ENCODE measurements at regions of chr16 and their contacts with region 1.

Region 1: DNA sequence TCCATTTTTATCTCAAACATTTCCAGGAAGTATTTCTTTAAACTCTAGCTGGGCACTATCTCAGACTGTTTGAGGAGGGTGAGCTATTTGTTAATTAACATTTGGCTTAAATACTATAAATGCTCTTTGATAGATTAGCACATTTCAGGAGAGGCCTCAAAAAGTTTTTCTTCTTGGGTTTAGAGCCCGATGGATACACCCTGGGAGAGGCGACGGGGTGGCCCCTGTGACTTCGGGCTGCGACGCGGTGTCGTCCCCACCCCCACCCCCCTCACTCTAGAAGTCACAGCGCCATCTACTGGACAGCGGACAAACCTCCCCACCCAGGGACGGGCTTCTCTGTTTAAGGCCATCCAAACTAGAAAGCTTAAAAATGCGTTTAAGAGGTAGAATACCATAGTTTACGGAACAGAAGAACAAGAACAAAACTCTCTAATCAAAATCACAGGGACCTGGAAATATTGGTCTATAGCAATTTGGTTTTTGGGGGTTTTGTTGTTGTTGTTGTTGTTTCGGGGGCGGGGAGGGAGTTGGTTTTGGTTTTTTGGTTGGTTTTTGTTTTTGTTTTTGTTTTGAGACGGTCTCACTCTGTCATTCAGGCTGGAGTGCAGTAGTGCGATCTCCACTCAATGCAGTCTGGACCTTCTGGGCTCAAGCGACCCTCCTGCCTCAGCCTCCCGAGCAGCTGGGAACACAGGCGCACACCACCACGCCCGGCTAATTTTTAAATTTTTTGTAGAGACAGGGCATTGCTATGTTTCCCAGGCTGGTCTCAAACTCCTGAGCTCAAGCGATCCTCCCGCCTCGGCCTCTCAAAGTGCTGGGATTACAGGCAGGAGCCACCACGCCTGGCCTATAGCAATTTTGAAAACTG is 254.4 kb downstream of the C16orf95 start:
- DNase-seq: peak; percentile 87

Region 2: DNA sequence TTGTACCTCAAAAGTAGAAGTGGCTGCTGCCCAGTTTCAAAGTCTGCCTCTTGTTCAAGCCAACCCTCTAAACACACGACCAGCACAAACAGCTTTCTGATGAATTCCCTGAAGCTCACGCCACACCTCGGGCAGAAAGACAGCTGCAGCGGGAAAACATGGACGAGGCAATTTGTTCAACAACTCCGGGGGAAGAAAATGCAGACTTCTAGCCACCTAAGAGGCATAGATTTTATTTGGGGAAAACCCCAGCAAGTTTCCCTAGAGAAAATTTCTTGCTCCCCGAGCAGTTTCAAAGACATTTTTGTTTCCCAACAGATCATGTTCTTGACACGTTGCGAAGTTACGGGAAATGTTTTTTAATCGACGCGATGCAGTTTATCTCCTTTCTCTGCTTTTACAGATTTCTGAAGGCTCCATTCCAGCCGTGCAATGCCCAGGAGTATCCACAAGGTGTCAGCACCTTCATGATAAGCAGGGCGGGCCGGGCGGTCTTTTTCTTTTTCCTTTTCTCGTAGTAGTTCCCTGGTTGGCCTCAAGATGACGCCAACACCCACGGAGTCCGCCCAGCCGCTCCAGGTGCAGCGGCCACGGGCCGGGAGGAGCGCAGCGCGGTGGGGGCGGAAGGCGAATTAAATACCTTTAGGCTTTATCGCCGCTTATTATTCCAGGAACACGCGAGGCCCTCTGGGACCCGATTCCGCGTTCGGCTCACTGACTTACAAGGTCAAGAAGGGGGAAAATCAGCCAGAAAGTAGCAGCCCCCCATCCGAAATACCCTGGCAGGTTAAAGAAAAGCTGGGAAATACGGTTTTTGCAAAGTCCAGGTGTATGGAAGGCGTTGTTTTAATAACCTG is 499.1 kb before region 1 on chr16:
- CTCF ChIA-PET with region 1: interaction called, 27 read pairs
- POLR2A ChIA-PET with region 1: no interaction called
- DNase-seq: peak; percentile 80

Region 3: GRCh38 chr16:87033541-87034300 is 29.1 kb before region 1 on chr16:
- CTCF ChIA-PET with region 1: no interaction called
- POLR2A ChIA-PET with region 1: no interaction called
- DNase-seq: no peak

Region 4: GRCh38 chr16:87047221-87048037 is 15.4 kb before region 1 on chr16:
- CTCF ChIA-PET with region 1: interaction called, 10 read pairs
- POLR2A ChIA-PET with region 1: no interaction called
- DNase-seq: peak; percentile 32

Region 5: GRCh38 chr16:87076950-87077749 is 14.3 kb after region 1 on chr16:
- CTCF ChIA-PET with region 1: interaction called, 10 read pairs
- POLR2A ChIA-PET with region 1: no interaction called
- DNase-seq: peak; percentile 79

Measured in HEK293T (cell line).